ENCODE measurements at regions of chr14 and their contacts with region 1.

Region 1: GRCh38 chr14:27869395-27869794 is 897.2 kb upstream of the FOXG1 start:
- DNase-seq: no peak
- ATAC-seq: no peak
- H3K4me3 ChIP-seq: no peak overlapping the region
- H3K27ac ChIP-seq: no peak overlapping the region
- H3K4me1 ChIP-seq: no peaks in the 10 kb centered on the region
- H3K27me3 ChIP-seq: no peaks in the 10 kb centered on the region

Region 2: DNA sequence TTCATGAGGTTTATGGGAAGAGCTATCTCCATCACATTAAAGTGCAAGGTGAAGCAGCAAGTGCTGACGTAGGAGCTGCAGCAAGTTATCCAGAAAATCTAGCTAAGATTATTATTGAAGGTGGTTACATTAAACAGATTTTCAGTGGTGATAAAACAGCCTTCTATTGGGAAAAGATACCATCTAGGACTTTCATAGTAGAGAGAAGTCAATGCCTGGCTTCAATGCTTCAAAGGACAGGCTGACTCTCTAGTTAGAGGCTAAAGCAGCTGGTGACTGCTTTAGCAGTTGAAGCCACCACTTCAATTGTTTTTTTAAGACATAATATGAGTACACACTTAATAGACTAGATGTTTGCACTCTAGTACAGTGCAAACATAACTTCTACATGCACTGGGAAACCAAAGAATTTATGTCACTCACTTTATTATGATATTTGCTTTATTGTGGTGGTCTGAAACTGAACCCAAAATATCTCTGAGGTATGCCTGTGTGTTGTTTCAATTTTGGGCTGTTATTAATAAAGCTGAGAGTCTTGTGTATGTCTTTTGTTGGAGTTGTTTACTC is 129.7 kb before region 1 on chr14:
- intact Hi-C with region 1: loop called in 1 of 4 experiments (anchors 5 kb)
- DNase-seq: no peak
- ATAC-seq: no peak
- H3K4me3 ChIP-seq: no peak overlapping the region
- H3K27ac ChIP-seq: no peak overlapping the region
- H3K4me1 ChIP-seq: no peaks in the 10 kb centered on the region
- H3K27me3 ChIP-seq: no peaks in the 10 kb centered on the region